Activated T-helper 1 cell treated with anti-CD3 and anti-CD28 coated beads, Interleukin-12 subunit alpha, Interleukin-12 subunit beta, Interleukin-2, Interleukin-4 antibody, amounts not matched to agents 30 ng/mL and 10 ng/mL and 1 ng/mL, durations not matched to agents 14 hours and 24 hours and 36 hours (primary cell): ENCODE measurements at regions of chr15 and their contacts with region 1.

Region 1: GRCh38 chr15:41331833-41332787 is at the start of gene OIP5:
- DNase-seq: peak; percentile 98
- H3K4me3 Mint-ChIP-seq: peak within 1 kb of the TSS; percentile 94
- H3K27ac Mint-ChIP-seq: peak within 1 kb of the TSS; percentile 95
- H3K4me1 Mint-ChIP-seq: peaks cover 33% of the 10 kb centered on the region
- H3K27me3 Mint-ChIP-seq: no peaks in the 10 kb centered on the region
- total RNA-seq, gene OIP5: 15.6 and 17.6 TPM in 2 replicates

Region 2: DNA sequence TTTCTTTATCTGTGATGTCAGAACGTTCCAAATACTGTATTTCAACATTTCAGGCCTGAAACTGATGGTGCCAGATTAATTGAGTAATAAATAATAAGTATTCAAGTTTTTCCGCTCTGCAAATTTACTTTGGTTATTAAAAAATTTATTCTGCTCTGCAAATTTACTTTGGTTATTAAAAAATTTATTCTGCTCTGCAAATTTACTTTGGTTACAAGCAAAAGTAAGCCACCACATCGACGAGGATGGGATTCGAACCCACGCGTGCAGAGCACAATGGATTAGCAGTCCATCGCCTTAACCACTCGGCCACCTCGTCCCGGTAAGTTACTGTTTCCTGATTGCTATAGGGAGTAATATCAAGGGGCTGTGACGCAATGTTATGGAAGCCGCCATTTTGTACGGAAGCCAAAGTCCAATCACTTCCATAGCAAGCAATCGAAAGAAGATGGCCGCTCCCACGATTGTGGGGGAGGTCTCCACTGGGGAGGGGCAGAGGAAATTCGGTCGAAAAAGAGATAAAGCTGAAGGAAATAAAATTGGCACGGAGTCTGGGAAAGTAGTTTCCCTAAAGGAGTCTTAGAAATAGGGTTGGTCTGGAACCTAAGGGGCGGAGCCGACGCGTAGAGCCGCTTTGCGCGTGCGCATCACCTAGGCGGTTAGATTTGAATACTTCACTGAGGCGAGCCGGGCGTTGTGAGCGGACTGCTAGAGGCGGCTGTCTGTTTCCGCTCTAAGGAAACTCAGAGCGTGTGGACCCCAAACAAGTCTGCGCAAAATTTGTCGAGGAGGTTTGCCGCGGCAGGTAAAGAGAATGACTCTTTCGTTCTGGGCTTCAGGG is 738.3 kb before region 1 on chr15 and contains the start of gene KNL1:
- intact Hi-C with region 1: loop called (anchors 5 kb)
- DNase-seq: peak; percentile 88
- H3K4me3 Mint-ChIP-seq: peak within 1 kb of the TSS; percentile 93
- H3K27ac Mint-ChIP-seq: peak within 1 kb of the TSS; percentile 98
- H3K4me1 Mint-ChIP-seq: peaks cover 45% of the 10 kb centered on the region
- H3K27me3 Mint-ChIP-seq: peaks cover 2% of the 10 kb centered on the region
- total RNA-seq, gene KNL1: 21.6 and 22.4 TPM in 2 replicates

Region 3: GRCh38 chr15:40952901-40953712 is 379.0 kb before region 1 on chr15 and contains the start of gene CHAC1:
- intact Hi-C with region 1: loop called (anchors 2 kb)
- DNase-seq: peak; percentile 96
- H3K4me3 Mint-ChIP-seq: peak within 1 kb of the TSS; percentile 92
- H3K27ac Mint-ChIP-seq: peak within 1 kb of the TSS; percentile 89
- H3K4me1 Mint-ChIP-seq: peaks cover 48% of the 10 kb centered on the region
- H3K27me3 Mint-ChIP-seq: no peaks in the 10 kb centered on the region
- total RNA-seq, gene CHAC1: 11.7 and 12.4 TPM in 2 replicates

Region 4: DNA sequence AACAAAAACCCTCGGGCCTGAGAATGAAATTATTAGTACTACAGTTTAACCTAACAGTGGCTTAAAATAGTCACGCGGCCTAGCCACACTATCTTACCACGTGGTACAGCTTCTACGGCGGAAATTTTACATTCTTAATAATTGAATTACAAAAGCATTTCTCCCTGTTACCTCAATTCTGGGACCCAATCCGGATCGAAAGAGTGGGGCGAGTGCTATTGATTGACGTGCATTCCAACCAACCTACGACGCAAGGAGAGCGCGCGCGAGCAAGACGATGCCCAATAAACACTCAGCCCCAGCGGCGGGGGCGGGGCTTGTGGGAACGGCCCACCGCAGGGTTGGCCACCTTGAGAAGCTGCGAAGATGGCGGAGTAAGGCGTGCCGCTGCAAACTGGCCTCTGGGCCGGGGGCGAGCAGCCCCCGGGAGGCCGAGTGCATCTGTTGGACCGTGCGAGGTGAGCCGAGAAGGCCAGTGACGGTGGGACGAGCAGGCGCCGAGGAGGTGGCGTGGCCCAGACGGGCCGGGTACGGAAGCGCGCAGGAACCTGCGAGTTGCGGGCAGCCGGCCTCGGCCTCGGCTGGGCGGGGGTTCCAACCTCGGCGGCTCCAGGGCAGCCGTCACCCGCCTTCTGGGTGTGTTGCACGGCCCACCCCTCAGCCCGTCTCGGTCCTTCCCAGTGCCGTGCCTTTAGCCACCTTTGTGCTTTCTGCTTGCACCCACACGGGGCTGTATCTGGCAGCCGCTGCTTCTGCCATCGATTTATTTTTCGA is 48.3 kb before region 1 on chr15:
- intact Hi-C with region 1: loop called (anchors 1 kb)
- DNase-seq: peak; percentile 96
- H3K4me3 Mint-ChIP-seq: peak overlapping the region; percentile 97
- H3K27ac Mint-ChIP-seq: peak overlapping the region; percentile 92
- H3K4me1 Mint-ChIP-seq: peaks cover 51% of the 10 kb centered on the region
- H3K27me3 Mint-ChIP-seq: no peaks in the 10 kb centered on the region

Region 5: GRCh38 chr15:41416742-41417406 is 84.8 kb after region 1 on chr15 and contains the start of gene RTF1:
- intact Hi-C with region 1: loop called (anchors 2 kb)
- DNase-seq: peak; percentile 98
- H3K4me3 Mint-ChIP-seq: peak within 1 kb of the TSS; percentile 93
- H3K27ac Mint-ChIP-seq: peak within 1 kb of the TSS; percentile 96
- H3K4me1 Mint-ChIP-seq: peaks cover 40% of the 10 kb centered on the region
- H3K27me3 Mint-ChIP-seq: no peaks in the 10 kb centered on the region
- total RNA-seq, gene RTF1: 41.0 and 44.7 TPM in 2 replicates